ENCODE measurements at regions of chr2 and their contacts with region 1.

Region 1: GRCh38 chr2:64052468-64053241 is 33.4 kb upstream of the VPS54 start:
- DNase-seq: peak; percentile 59
- ATAC-seq: peak; percentile 11; the same call in 1 of the 2 replicates
- H3K4me3 ChIP-seq: no peak overlapping the region
- H3K27ac ChIP-seq: no peak overlapping the region
- H3K4me1 ChIP-seq: peaks cover 4% of the 10 kb centered on the region; the same call in 1 of the 2 replicates
- H3K27me3 ChIP-seq: no peaks in the 10 kb centered on the region
- CTCF ChIP-seq: no peak

Region 2: DNA sequence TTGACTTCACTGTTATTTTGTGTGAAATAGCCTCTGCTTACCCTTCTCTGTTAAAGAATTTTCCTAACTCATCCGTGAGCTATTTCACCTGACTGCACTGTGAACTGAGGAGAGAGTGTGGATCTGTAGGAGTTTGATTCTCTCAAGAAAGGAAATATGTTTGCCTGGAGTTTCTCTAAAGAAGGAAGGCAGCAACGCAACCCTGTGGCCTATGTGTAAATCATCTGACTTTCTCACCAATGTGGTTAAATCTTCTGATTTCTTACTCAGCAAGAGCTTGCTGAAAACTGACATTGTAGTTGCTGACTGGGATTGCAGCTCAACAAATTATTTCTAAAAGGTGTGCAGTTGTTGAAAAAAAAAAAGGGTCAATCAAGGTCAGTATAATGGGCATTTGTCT is 245.5 kb after region 1 on chr2:
- CTCF ChIA-PET with region 1: interaction called, 16 read pairs
- POLR2A ChIA-PET with region 1: no interaction called
- intact Hi-C with region 1: loop called (anchors 1 kb)
- DNase-seq: peak; percentile 42
- ATAC-seq: no peak; the same call in 1 of the 2 replicates
- H3K4me3 ChIP-seq: no peak overlapping the region
- H3K27ac ChIP-seq: no peak overlapping the region
- H3K4me1 ChIP-seq: no peaks in the 10 kb centered on the region
- H3K27me3 ChIP-seq: peaks cover 27% of the 10 kb centered on the region
- CTCF ChIP-seq: no peak

Region 3: GRCh38 chr2:65329525-65329924 is 1276.9 kb after region 1 on chr2:
- CTCF ChIA-PET with region 1: no interaction called
- POLR2A ChIA-PET with region 1: no interaction called
- intact Hi-C with region 1: no loop called
- DNase-seq: no peak
- ATAC-seq: no peak
- H3K4me3 ChIP-seq: no peak overlapping the region
- H3K27ac ChIP-seq: no peak overlapping the region
- H3K4me1 ChIP-seq: no peaks in the 10 kb centered on the region
- H3K27me3 ChIP-seq: no peaks in the 10 kb centered on the region
- CTCF ChIP-seq: no peak